ENCODE measurements at regions of chr11 and their contacts with region 1.

Region 1: DNA sequence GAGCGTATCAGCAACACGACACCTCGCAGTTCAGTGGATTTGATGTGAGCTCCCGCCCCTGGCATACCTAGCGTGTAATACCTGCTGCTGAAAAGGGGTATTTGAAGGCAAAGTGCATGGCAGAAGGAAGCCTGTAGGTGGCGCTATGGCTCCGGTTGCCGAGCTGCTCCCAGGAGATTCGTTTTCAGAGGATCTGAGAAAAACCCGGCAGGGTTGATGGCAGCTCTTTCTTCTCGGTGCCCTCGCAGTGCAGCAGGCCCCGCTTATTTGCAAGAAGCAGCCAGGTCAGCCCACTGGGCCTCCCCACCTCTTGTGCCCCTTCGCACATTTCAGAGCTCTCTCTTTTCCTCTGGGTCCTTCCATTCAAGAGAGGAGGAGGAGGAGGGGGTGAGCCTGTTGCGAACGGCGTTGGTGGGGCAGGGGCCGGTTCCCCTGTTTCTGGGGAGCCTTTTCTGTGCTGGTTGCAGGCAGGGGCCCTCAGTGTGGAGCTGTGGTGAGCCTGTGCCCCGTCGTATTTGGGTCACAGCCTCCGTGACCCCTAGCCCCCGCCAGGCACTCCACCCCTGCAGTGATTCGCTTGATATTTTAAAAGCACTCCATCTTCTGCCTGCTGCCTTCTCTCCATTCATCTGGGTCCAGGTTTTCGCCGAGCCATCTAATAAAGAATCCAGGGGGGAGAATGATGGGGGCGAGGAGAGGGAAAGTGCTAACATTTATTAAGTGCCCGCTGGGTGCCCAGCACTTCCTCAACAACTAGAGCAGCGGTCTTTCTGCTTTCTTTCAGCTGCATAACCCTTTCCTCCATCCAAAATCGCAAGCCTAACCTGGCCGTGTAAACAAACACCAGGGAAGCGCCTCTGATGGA is 85.3 kb upstream of the SYT13 start:
- H3K4me3 ChIP-seq: no peak overlapping the region
- H3K27ac ChIP-seq: no peak overlapping the region
- H3K4me1 ChIP-seq: no peaks in the 10 kb centered on the region
- CTCF ChIP-seq: peak; percentile 36; the same call in 1 of the 2 replicates

Region 2: GRCh38 chr11:45347348-45348082 is 24.0 kb before region 1 on chr11:
- CTCF ChIA-PET with region 1: interaction called, 11 read pairs
- POLR2A ChIA-PET with region 1: no interaction called
- H3K4me3 ChIP-seq: no peak overlapping the region
- H3K27ac ChIP-seq: no peak overlapping the region
- H3K4me1 ChIP-seq: no peaks in the 10 kb centered on the region
- CTCF ChIP-seq: no peak

Region 3: GRCh38 chr11:45383224-45383623 is 11.7 kb after region 1 on chr11:
- CTCF ChIA-PET with region 1: interaction called, 17 read pairs
- POLR2A ChIA-PET with region 1: no interaction called
- H3K4me3 ChIP-seq: no peak overlapping the region
- H3K27ac ChIP-seq: no peak overlapping the region
- H3K4me1 ChIP-seq: no peaks in the 10 kb centered on the region
- CTCF ChIP-seq: no peak

Region 4: GRCh38 chr11:45390407-45390806 is 18.9 kb after region 1 on chr11:
- CTCF ChIA-PET with region 1: interaction called, 16 read pairs
- POLR2A ChIA-PET with region 1: no interaction called
- H3K4me3 ChIP-seq: no peak overlapping the region
- H3K27ac ChIP-seq: no peak overlapping the region
- H3K4me1 ChIP-seq: no peaks in the 10 kb centered on the region
- CTCF ChIP-seq: no peak

Region 5: DNA sequence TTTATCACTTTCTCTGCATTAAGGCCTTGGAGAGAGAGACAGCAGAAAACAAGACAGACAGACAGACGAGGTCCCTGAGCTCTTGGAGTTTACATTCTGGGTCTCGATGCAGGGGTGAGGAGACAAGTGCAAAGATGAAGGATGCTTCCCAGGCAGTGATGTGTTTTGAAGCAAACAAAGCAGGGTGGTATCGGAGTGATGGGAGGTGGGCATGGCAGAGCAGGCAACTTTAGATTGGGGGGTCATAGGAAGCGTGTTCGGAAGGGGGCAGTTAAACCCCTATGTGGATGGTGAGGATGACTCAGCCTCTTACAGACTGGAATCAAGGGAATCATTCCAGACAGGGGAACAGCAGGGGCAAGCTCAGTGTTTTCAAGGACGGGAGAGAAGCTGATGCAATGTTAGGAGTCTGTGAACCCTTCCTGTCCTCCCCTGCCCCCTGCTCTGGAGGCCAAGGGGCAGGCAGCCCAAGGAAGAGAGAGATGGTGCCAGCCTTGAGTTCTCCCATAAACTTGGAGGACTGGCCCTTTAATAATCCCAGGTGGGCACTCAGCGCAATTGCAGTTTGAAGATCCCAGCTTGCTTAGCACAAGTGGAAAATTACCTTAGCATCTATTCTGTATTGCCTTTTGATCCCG is 113.7 kb after region 1 on chr11:
- CTCF ChIA-PET with region 1: interaction called, 10 read pairs
- POLR2A ChIA-PET with region 1: no interaction called
- H3K4me3 ChIP-seq: no peak overlapping the region
- H3K27ac ChIP-seq: no peak overlapping the region
- H3K4me1 ChIP-seq: no peaks in the 10 kb centered on the region
- CTCF ChIP-seq: no peak

Region 6: GRCh38 chr11:45655347-45655756 is 283.9 kb after region 1 on chr11:
- CTCF ChIA-PET with region 1: interaction called, 97 read pairs
- POLR2A ChIA-PET with region 1: no interaction called
- H3K4me3 ChIP-seq: no peak overlapping the region
- H3K27ac ChIP-seq: no peak overlapping the region
- H3K4me1 ChIP-seq: no peaks in the 10 kb centered on the region
- CTCF ChIP-seq: peak; percentile 88

Region 7: GRCh38 chr11:45765836-45766235 is 394.4 kb after region 1 on chr11:
- CTCF ChIA-PET with region 1: interaction called, 97 read pairs
- POLR2A ChIA-PET with region 1: no interaction called
- H3K4me3 ChIP-seq: no peak overlapping the region
- H3K27ac ChIP-seq: no peak overlapping the region
- H3K4me1 ChIP-seq: no peaks in the 10 kb centered on the region
- CTCF ChIP-seq: no peak